Caco-2 (cell line): ENCODE measurements at regions of chr9 and their contacts with region 1.

Region 1: GRCh38 chr9:15416880-15417279 is 5.8 kb upstream of the SNAPC3 start:
- DNase-seq: peak; percentile 55 to 59
- H3K4me3 ChIP-seq: no peak overlapping the region
- H3K4me3 Mint-ChIP-seq: no peak overlapping the region
- H3K27ac Mint-ChIP-seq: no peak overlapping the region
- H3K4me1 ChIP-seq: no peaks in the 10 kb centered on the region
- H3K4me1 Mint-ChIP-seq: no peaks in the 10 kb centered on the region
- H3K27me3 ChIP-seq: no peaks in the 10 kb centered on the region
- H3K27me3 Mint-ChIP-seq: no peaks in the 10 kb centered on the region
- CTCF ChIP-seq: peak; percentile 46 to 55

Region 2: GRCh38 chr9:15211160-15211814 is 205.6 kb before region 1 on chr9:
- CTCF ChIA-PET with region 1: no interaction called
- POLR2A ChIA-PET with region 1: no interaction called
- intact Hi-C with region 1: loop called (anchors 1 kb)
- DNase-seq: peak; percentile 49 to 75
- H3K4me3 ChIP-seq: no peak overlapping the region
- H3K4me3 Mint-ChIP-seq: no peak overlapping the region
- H3K27ac Mint-ChIP-seq: no peak overlapping the region
- H3K4me1 ChIP-seq: 0 out of 2 replicates have a peak, but pooled peaks cover 4% of the 10 kb centered on the region
- H3K4me1 Mint-ChIP-seq: peaks cover 7% of the 10 kb centered on the region
- H3K27me3 ChIP-seq: no peaks in the 10 kb centered on the region
- H3K27me3 Mint-ChIP-seq: no peaks in the 10 kb centered on the region
- CTCF ChIP-seq: peak; percentile 71 to 79

Region 3: DNA sequence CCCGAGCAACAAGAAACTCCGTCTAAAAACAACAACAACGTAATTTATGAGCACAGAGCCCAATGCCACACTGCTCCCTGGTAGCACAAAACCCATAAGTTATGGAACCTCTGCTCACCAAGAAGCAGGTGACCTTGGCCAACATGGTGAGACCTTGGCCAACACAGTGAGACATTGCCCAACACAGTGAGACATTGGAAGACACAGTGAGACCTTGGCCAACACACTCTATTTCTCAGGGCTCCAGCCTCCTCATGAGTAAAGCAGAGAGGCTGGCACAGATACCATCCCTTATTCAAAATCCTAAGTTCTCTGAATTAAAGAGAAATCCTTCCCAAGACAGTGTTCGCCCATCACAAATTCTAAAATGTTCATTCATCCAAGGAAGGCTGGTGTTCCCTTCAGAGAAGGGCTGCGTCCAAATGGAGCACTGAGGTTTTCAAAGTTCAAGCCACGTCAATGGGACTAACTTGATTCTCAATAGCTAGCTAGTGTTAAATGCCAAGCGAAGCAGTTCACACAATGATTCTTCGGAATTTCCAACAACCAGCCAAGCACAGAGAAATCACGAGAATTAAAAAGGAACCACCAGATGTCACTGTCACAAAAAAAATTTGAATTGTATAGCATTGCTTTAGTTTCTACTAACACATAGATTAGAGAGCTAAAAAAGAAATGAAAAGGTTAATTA is 139.3 kb before region 1 on chr9:
- CTCF ChIA-PET with region 1: interaction called, 3 read pairs
- POLR2A ChIA-PET with region 1: no interaction called
- intact Hi-C with region 1: loop called (anchors 1 kb)
- DNase-seq: peak in 1 of 2 experiments; percentile 30
- H3K4me3 ChIP-seq: no peak overlapping the region
- H3K4me3 Mint-ChIP-seq: no peak overlapping the region
- H3K27ac Mint-ChIP-seq: no peak overlapping the region
- H3K4me1 ChIP-seq: peaks cover 17% of the 10 kb centered on the region
- H3K4me1 Mint-ChIP-seq: no peaks in the 10 kb centered on the region
- H3K27me3 ChIP-seq: no peaks in the 10 kb centered on the region
- H3K27me3 Mint-ChIP-seq: no peaks in the 10 kb centered on the region
- CTCF ChIP-seq: peak in 1 of 2 experiments; percentile 36

Region 4: GRCh38 chr9:15306757-15307534 is 109.9 kb before region 1 on chr9 and contains the start of gene TTC39B:
- CTCF ChIA-PET with region 1: no interaction called
- POLR2A ChIA-PET with region 1: no interaction called
- intact Hi-C with region 1: loop called (anchors 1 kb)
- DNase-seq: peak; percentile 88 to 93
- H3K4me3 ChIP-seq: peak within 1 kb of the TSS; percentile 74
- H3K4me3 Mint-ChIP-seq: peak within 1 kb of the TSS; percentile 92
- H3K27ac Mint-ChIP-seq: peak within 1 kb of the TSS; percentile 79
- H3K4me1 ChIP-seq: peaks cover 4% of the 10 kb centered on the region; the same call in 1 of the 2 replicates
- H3K4me1 Mint-ChIP-seq: peaks cover 7% of the 10 kb centered on the region
- H3K27me3 ChIP-seq: no peaks in the 10 kb centered on the region
- H3K27me3 Mint-ChIP-seq: no peaks in the 10 kb centered on the region
- CTCF ChIP-seq: no peak
- total RNA-seq, gene TTC39B: 6.9 and 7.6 TPM in 2 replicates

Region 5: DNA sequence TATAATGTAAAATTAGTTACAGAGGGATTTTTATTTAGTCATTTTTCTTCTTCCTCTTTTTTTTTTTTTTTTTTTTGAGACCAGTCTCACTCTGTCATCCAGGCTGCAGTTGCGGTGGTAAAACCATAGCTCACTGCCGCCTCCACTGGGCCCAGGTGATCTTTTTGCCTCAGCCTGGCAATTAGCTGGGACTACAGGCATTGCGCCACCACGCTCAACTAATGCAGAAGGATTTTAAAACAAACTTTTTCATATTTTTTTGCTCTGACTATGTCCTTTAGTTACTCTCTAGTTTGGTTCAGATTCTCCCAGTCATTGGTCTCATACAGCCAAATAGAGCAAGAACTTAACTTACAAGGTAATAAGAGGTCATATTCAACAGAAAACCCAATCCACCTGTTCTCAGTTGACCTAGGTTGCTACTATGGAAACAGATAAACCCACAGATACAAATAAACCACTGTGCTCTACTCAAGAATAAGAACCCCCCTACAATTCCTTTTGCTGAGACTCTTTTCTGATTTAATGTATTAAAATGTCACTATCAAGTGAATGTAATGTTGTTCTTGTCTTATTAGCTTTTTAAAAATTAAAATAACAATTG is 59.7 kb before region 1 on chr9:
- CTCF ChIA-PET with region 1: no interaction called
- POLR2A ChIA-PET with region 1: no interaction called
- intact Hi-C with region 1: loop called (anchors 2 kb)
- DNase-seq: peak in 1 of 2 experiments; percentile 29
- H3K4me3 ChIP-seq: no peak overlapping the region
- H3K4me3 Mint-ChIP-seq: no peak overlapping the region
- H3K27ac Mint-ChIP-seq: no peak overlapping the region
- H3K4me1 ChIP-seq: peaks cover 5% of the 10 kb centered on the region; the same call in 1 of the 2 replicates
- H3K4me1 Mint-ChIP-seq: peaks cover 18% of the 10 kb centered on the region
- H3K27me3 ChIP-seq: no peaks in the 10 kb centered on the region
- H3K27me3 Mint-ChIP-seq: no peaks in the 10 kb centered on the region
- CTCF ChIP-seq: no peak